Sigmoid colon (tissue), 7 donors: ENCODE measurements at regions of chr18 and their contacts with region 1.

Region 1: DNA sequence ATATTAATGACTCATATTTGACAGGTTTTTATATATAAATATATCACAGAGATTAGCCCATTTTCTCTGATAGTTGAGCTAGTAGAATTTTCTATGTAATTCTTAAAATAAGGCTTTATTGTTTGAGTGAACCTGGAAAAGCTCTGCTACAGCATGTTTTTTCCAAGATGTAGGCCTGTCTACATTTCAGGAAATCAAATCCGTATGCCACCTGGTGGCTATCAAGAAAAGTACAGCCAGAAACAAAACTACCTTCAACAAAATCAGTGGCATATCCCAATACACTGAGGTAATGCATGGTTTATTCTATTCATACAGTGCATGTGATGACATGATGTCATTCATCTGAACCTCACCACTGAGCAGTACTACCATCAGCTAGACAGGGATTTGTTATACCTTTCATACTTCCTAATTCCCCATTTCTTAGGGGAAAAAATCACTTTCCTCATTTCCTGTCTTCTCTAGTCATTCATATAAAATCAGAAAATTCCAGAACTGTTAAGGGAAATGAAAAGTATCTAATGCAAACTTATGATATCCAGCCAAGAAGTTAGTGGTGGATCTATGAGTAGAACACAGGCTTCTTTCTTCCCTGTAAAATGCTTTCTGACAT is 310.4 kb upstream of the SYT4 start:
- DNase-seq: no peak
- H3K4me3 ChIP-seq: no peak overlapping the region
- H3K27ac ChIP-seq: no peak overlapping the region
- H3K4me1 ChIP-seq: no peaks in the 10 kb centered on the region
- H3K27me3 ChIP-seq: no peaks in the 10 kb centered on the region
- CTCF ChIP-seq: peak; percentile 31 to 71 (median 60)
- EP300 ChIP-seq: no peak
- POLR2A ChIP-seq: no peak

Region 2: GRCh38 chr18:43571078-43571689 is 16.5 kb before region 1 on chr18:
- intact Hi-C with region 1: loop called (anchors 1 kb)
- DNase-seq: no peak
- H3K4me3 ChIP-seq: no peak overlapping the region
- H3K27ac ChIP-seq: no peak overlapping the region
- H3K4me1 ChIP-seq: peaks cover 0 to 6% (median 0%) of the 10 kb centered on the region in 4 donors
- H3K27me3 ChIP-seq: no peaks in the 10 kb centered on the region
- CTCF ChIP-seq: peak; percentile 20 to 73 (median 57)
- EP300 ChIP-seq: no peak
- POLR2A ChIP-seq: no peak